Activated CD8-positive, alpha-beta T cell treated with anti-CD3 and anti-CD28 coated beads, Interleukin-2, amount 10 ng/mL, durations not matched to agents 7 days and 5 days (primary cell): ENCODE measurements at regions of chr1 and their contacts with region 1.

Region 1: DNA sequence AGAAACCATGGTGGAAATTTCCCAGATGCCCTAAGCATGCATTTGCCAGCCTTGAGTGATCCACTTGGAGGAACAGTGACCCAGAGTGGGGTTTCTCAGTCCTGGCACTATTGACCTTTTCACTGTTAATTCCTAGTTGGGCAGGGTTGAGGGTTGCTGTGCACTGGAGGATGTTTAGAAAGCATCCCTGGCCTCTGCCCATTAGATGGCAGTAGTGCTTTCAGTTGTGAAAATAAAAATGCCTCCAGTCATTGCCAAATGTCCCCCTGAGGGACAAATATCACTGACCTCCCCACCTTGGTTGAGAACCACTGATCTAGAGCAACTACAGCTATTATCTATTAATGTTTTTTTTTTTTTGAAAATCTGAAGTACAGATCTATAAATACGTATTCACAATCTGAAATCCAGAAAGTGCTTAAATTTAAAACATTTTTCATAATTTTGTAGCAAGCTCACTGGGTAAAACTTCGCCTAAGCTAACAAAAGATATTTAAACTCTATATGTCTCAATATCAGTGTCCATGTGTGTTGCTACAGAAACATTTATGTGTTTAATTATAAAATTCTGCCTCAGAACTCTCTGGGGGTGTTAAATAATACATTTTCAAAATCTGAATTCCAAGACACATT is 27.3 kb downstream of the F3 start:
- DNase-seq: peak; percentile 44
- ATAC-seq: no peak
- H3K4me3 Mint-ChIP-seq: no peak overlapping the region
- H3K27ac Mint-ChIP-seq: no peak overlapping the region
- H3K4me1 Mint-ChIP-seq: no peaks in the 10 kb centered on the region
- H3K27me3 Mint-ChIP-seq: no peaks in the 10 kb centered on the region

Region 2: GRCh38 chr1:94532077-94532476 is 17.9 kb after region 1 on chr1:
- CTCF ChIA-PET with region 1: no interaction called
- POLR2A ChIA-PET with region 1: no interaction called
- DNase-seq: no peak
- ATAC-seq: no peak
- H3K4me3 Mint-ChIP-seq: no peak overlapping the region
- H3K27ac Mint-ChIP-seq: no peak overlapping the region
- H3K4me1 Mint-ChIP-seq: no peaks in the 10 kb centered on the region
- H3K27me3 Mint-ChIP-seq: peaks cover 7% of the 10 kb centered on the region

Region 3: GRCh38 chr1:94801919-94802546 is 287.8 kb after region 1 on chr1:
- CTCF ChIA-PET with region 1: interaction called, 16 read pairs
- POLR2A ChIA-PET with region 1: interaction called, 4 read pairs
- DNase-seq: no peak
- ATAC-seq: peak; percentile 71
- H3K4me3 Mint-ChIP-seq: peak overlapping the region; percentile 46
- H3K27ac Mint-ChIP-seq: no peak overlapping the region
- H3K4me1 Mint-ChIP-seq: peaks cover 10% of the 10 kb centered on the region
- H3K27me3 Mint-ChIP-seq: peaks cover 2% of the 10 kb centered on the region